ENCODE measurements at regions of chr2 and their contacts with region 1.

Region 1: GRCh38 chr2:71545572-71546274 is 92.4 kb downstream of the DYSF start:
- DNase-seq: no peak
- H3K4me3 ChIP-seq: no peak overlapping the region
- CTCF ChIP-seq: peak; percentile 68

Region 2: GRCh38 chr2:71530641-71531332 is 14.9 kb before region 1 on chr2:
- CTCF ChIA-PET with region 1: interaction called, 46 read pairs
- POLR2A ChIA-PET with region 1: no interaction called
- DNase-seq: no peak
- H3K4me3 ChIP-seq: no peak overlapping the region
- CTCF ChIP-seq: peak; percentile 45

Region 3: DNA sequence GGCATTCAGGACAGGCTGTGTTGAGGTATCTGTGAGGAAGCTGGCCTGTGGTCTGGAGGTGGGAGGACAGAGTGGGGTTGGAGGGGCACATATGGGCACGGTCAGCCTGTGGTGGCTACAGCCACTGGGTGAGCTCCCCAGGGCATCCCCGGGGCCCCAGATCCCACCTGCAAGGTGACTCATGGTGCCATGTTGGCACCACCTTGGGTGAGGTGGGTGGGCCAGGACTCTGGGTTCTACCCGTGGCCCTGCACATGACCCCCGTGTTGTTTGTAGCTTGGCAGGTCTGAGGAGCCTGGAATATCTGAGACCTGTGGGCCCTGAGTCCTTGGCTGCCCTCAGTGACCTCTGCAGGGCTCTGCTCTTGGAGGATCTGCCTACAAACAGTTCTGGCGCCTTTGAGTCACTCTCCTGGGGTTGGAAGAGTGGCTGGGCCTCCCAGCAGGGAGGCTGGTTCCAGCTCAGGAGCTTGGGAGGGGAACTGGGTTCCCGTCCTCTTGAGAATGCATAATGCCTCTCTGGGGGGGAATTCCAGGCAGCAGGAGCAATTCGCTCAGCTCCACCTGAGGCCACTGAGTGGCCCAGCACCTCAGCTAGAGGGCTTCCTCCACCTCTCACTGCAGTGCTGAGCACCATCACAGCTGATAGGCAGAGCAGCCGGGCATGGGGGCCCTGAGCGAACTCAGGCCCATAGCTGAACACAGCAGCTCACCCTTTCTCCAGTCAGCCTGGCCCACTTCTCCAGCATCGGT is 12.8 kb after region 1 on chr2:
- CTCF ChIA-PET with region 1: interaction called, 42 read pairs
- POLR2A ChIA-PET with region 1: no interaction called
- DNase-seq: no peak
- H3K4me3 ChIP-seq: no peak overlapping the region
- CTCF ChIP-seq: no peak